MCF 10A (cell line): ENCODE measurements at regions of chr12 and their contacts with region 1.

Region 1: GRCh38 chr12:54306925-54307741 is 6.3 kb upstream of the NFE2 start:
- DNase-seq: peak; percentile 99
- H3K4me3 Mint-ChIP-seq: no peak overlapping the region
- H3K27ac Mint-ChIP-seq: no peak overlapping the region
- H3K4me1 Mint-ChIP-seq: peaks cover 34% of the 10 kb centered on the region
- H3K27me3 Mint-ChIP-seq: no peaks in the 10 kb centered on the region
- CTCF ChIP-seq: no peak

Region 2: DNA sequence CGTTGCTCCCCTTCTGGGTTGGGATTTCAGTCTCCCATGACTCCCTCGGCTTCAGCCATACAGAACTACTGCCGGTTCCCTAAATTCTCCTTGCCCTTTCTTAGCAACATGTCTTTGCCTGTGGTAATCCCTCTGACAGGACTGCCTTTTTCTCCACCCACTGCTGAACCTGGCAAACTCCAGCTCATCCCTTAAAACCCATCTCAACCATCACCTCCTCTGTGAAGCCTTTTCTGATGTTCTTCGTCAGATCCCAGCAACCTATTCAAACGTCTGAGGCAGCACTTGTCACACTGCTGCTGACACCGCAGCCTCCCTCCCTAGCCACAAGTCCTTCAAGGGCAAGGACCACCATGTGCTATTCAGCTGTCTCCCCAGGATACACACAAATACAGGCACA is 108.1 kb before region 1 on chr12:
- CTCF ChIA-PET with region 1: no interaction called
- POLR2A ChIA-PET with region 1: no interaction called
- intact Hi-C with region 1: no loop called
- DNase-seq: no peak
- H3K4me3 Mint-ChIP-seq: no peak overlapping the region
- H3K27ac Mint-ChIP-seq: peak overlapping the region; percentile 64
- H3K4me1 Mint-ChIP-seq: peaks cover 17% of the 10 kb centered on the region
- H3K27me3 Mint-ChIP-seq: peaks cover 3% of the 10 kb centered on the region
- CTCF ChIP-seq: no peak

Region 3: GRCh38 chr12:54294152-54294952 is 12.8 kb before region 1 on chr12:
- CTCF ChIA-PET with region 1: interaction called, 37 read pairs
- POLR2A ChIA-PET with region 1: interaction called, 34 read pairs
- intact Hi-C with region 1: no loop called
- DNase-seq: peak; percentile 63
- H3K4me3 Mint-ChIP-seq: no peak overlapping the region
- H3K27ac Mint-ChIP-seq: no peak overlapping the region
- H3K4me1 Mint-ChIP-seq: peaks cover 7% of the 10 kb centered on the region
- H3K27me3 Mint-ChIP-seq: no peaks in the 10 kb centered on the region
- CTCF ChIP-seq: peak; percentile 81